ENCODE measurements at regions of chr21 and their contacts with region 1.

Region 1: GRCh38 chr21:32604464-32604863 is 7.7 kb downstream of the CFAP298 start:
- DNase-seq: no peak
- H3K4me3 ChIP-seq: no peak overlapping the region
- H3K27ac ChIP-seq: no peak overlapping the region
- H3K4me1 ChIP-seq: no peaks in the 10 kb centered on the region
- H3K27me3 ChIP-seq: no peaks in the 10 kb centered on the region
- CTCF ChIP-seq: no peak

Region 2: DNA sequence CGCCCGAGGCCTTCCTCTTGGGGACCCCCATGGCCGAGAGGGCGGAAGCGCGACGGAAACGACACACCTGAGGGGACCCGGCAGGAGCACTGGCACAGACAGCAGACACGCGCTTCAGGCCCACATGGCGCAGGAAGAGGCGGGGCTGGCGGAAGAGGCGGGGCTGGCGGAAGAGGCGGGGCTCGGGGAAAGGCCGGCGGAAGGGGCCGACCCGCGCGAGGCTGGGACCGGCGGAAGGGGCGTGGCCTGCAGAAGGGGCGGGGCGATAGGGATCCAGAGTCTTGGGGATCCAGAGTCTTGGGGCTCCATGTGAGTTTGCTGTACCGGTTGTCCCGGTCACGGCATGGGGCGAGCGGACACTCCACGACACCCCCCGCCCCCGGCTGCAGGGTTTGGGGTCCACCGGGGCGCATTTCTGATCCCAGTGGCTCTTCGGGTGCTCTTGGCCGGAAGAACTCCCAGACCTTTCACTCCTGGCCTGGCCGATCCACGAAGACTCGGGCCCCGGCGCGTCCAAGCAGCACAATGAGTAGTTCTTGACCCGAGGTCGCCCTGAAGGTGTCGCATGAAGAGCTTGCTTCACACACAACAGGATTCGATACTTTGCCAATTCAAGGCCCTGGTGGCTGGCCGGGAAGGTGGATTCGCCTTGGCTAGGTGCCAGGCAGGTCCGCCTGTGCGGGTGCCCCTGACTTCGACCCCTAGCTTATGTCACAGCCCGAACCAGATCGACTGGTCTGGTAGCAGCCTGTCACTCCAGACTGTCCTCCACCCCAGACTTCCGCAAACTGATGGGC is 211.4 kb before region 1 on chr21 and contains the start of gene URB1:
- intact Hi-C with region 1: loop called (anchors 5 kb)
- DNase-seq: peak; percentile 86 to 94
- H3K4me3 ChIP-seq: peak within 1 kb of the TSS; percentile 87 to 97
- H3K27ac ChIP-seq: peak within 1 kb of the TSS; percentile 72 to 84
- H3K4me1 ChIP-seq: peaks cover 0 to 28% (median 20%) of the 10 kb centered on the region in 4 donors
- H3K27me3 ChIP-seq: no peaks in the 10 kb centered on the region
- CTCF ChIP-seq: no peak

Region 3: DNA sequence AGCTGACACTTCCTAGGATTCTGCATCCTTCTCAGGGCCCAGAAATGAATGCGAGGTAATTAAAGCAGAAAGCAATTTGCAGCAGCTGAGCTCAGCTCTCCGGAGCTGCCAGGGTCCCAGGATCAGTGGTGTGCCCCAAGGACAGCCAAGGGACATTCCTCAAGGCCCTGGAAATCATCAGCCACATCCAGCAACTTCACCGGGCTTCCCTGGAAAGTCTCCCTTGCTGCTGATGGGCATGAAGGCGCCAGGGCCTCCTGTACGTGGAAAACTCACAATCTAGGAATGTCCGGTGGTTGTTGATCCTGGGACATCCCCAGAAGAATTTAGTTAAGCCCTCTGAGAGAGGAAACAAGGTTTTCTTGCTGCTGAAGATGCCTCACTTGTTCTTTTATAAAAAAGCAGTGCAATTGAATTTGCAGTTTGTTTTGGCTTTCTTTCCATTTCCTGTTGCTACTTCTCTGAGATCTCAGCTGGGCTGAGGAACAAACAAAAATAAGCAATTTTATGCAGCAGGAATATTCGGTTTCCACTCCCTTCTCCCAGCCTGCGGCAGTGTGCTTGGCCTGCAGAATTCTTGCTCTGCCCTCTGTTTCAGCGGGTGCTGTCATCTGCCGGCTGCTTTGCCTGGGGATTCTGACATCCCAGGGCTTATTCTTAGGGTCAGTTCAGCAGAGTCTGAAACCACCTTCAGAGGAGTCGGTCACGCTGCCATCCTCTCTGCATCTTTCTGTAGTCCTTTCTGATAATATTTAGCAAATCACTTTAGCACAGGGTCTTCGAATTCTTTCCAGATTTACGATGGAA is 105.0 kb before region 1 on chr21:
- intact Hi-C with region 1: no loop called
- DNase-seq: no peak
- H3K4me3 ChIP-seq: no peak overlapping the region
- H3K27ac ChIP-seq: peak overlapping the region; percentile 17 to 40
- H3K4me1 ChIP-seq: peaks cover 0 to 32% (median 22%) of the 10 kb centered on the region in 4 donors
- H3K27me3 ChIP-seq: no peaks in the 10 kb centered on the region
- CTCF ChIP-seq: no peak